Mammary epithelial cell (primary cell): ENCODE measurements at regions of chr2 and their contacts with region 1.

Region 1: GRCh38 chr2:100291120-100291970 is 31.0 kb downstream of the LONRF2 start:
- DNase-seq: peak; percentile 92
- H3K4me3 ChIP-seq: no peak overlapping the region
- H3K27ac ChIP-seq: peak overlapping the region; percentile 84
- H3K4me1 ChIP-seq: peaks cover 19% of the 10 kb centered on the region
- H3K27me3 ChIP-seq: no peaks in the 10 kb centered on the region
- CTCF ChIP-seq: no peak

Region 2: GRCh38 chr2:99715956-99716355 is 575.4 kb before region 1 on chr2:
- CTCF ChIA-PET with region 1: no interaction called
- dilution Hi-C with region 1: no loop called
- in situ Hi-C with region 1: no loop called
- intact Hi-C with region 1: no loop called
- DNase-seq: no peak
- H3K4me3 ChIP-seq: no peak overlapping the region
- H3K27ac ChIP-seq: no peak overlapping the region
- H3K4me1 ChIP-seq: no peaks in the 10 kb centered on the region
- H3K27me3 ChIP-seq: peaks cover 7% of the 10 kb centered on the region
- CTCF ChIP-seq: no peak

Region 3: DNA sequence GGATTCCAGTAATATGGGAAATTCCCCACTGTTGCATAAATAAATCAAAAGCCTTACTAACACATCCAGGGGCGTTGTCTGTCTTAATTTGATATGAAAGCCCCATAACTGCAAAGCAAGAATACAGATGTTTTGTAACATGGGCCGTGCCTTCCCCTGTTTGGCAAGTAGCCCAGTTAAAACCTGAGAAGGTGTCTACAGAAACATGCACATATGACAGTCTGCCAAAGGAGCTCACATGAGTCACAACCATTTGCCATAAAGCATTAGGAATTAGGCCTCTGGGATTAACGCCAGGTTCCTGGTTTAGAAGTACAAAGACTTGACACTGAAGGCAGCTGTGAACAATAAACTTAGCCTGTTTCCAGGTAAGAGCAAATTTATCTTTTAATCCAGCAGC is 74.1 kb after region 1 on chr2:
- CTCF ChIA-PET with region 1: no interaction called
- dilution Hi-C with region 1: loop called (anchors 5 kb)
- in situ Hi-C with region 1: no loop called
- intact Hi-C with region 1: loop called (anchors 5 kb)
- DNase-seq: peak; percentile 96
- H3K4me3 ChIP-seq: no peak overlapping the region
- H3K27ac ChIP-seq: no peak overlapping the region
- H3K4me1 ChIP-seq: peaks cover 9% of the 10 kb centered on the region
- H3K27me3 ChIP-seq: no peaks in the 10 kb centered on the region
- CTCF ChIP-seq: no peak

Region 4: GRCh38 chr2:100482741-100483140 is 191.4 kb after region 1 on chr2:
- CTCF ChIA-PET with region 1: no interaction called
- dilution Hi-C with region 1: no loop called
- in situ Hi-C with region 1: no loop called
- intact Hi-C with region 1: no loop called
- DNase-seq: no peak
- H3K4me3 ChIP-seq: no peak overlapping the region
- H3K27ac ChIP-seq: no peak overlapping the region
- H3K4me1 ChIP-seq: no peaks in the 10 kb centered on the region
- H3K27me3 ChIP-seq: no peaks in the 10 kb centered on the region
- CTCF ChIP-seq: no peak

Region 5: DNA sequence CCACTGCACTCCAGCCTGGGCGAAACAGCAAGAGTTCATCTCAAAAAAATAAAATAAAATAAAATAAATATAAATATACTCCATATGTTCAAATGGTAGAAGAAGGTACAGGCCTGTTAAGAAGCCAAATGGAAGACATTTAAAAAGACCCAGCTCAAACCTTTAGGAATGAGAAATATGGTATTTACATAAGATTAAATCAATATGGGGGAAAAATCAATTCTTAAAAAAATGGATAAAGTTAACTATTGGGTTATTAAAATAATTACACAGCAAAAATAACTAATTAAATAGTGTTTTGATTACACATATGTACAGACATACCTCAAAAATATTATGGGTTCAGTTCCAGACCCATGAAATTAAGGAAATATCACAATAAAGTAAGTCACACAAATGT is 774.9 kb after region 1 on chr2:
- CTCF ChIA-PET with region 1: no interaction called
- dilution Hi-C with region 1: no loop called
- in situ Hi-C with region 1: no loop called
- intact Hi-C with region 1: no loop called
- DNase-seq: no peak
- H3K4me3 ChIP-seq: no peak overlapping the region
- H3K27ac ChIP-seq: peak overlapping the region; percentile 99
- H3K4me1 ChIP-seq: peaks cover 32% of the 10 kb centered on the region
- H3K27me3 ChIP-seq: no peaks in the 10 kb centered on the region
- CTCF ChIP-seq: no peak